CD14-positive monocyte (primary cell): ENCODE measurements at regions of chr14 and their contacts with region 1.

Region 1: DNA sequence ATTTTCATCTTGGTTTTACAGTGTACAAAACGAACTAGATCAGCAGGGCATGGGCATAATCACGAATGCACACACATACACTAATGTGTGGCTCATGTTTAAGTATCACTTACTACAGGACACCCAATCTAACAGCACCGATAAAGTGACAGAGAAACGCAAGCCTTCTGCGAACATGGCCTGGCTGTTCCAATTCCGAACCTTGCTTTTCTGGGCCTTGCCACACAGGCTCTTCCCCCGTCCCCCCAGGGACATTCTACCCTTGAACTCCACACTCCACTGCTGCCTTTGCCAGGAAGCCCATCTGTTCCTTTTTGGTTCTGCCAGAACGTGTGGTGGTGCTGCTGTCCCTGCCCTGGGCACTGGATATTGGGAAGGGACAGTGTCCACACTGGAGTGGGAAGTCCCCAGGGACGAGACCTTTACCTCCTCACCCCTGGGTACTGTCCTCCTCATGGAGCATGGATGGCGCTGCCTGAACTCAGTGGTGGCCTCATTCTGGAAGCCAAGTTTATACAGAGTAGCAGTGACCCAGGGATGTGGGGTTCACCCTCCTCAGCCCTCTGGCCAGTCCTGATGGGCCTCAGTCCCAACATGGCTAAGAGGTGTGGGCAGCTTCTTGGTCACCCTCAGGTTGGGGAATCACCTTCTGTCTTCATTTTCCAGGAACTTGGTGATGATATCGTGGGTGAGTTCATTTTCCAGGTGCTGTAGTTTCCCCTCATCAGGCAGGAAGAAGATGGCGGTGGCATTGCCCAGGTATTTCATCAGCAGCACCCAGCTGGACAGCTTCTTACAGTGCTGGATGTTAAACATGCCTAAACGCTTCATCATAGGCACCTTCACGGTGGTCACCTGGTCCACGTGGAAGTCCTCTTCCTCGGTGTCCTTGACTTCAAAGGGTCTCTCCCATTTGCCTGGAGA is 7.9 kb downstream of the SERPINA1 start:
- DNase-seq: no peak
- H3K4me3 ChIP-seq: no peak overlapping the region
- H3K4me3 Mint-ChIP-seq: no peak overlapping the region
- H3K27ac ChIP-seq: peak overlapping the region in 1 of 2 donors; percentile 46
- H3K27ac Mint-ChIP-seq: peak overlapping the region in 5 of 7 donors; percentile 15 to 87 (median 47)
- H3K4me1 ChIP-seq: peaks cover 33 to 42% of the 10 kb centered on the region in 2 donors
- H3K4me1 Mint-ChIP-seq: peaks cover 43% of the 10 kb centered on the region
- H3K27me3 ChIP-seq: no peaks in the 10 kb centered on the region
- H3K27me3 Mint-ChIP-seq: peaks cover 0 to 4% (median 3%) of the 10 kb centered on the region in 3 donors
- CTCF ChIP-seq: no peak

Region 2: DNA sequence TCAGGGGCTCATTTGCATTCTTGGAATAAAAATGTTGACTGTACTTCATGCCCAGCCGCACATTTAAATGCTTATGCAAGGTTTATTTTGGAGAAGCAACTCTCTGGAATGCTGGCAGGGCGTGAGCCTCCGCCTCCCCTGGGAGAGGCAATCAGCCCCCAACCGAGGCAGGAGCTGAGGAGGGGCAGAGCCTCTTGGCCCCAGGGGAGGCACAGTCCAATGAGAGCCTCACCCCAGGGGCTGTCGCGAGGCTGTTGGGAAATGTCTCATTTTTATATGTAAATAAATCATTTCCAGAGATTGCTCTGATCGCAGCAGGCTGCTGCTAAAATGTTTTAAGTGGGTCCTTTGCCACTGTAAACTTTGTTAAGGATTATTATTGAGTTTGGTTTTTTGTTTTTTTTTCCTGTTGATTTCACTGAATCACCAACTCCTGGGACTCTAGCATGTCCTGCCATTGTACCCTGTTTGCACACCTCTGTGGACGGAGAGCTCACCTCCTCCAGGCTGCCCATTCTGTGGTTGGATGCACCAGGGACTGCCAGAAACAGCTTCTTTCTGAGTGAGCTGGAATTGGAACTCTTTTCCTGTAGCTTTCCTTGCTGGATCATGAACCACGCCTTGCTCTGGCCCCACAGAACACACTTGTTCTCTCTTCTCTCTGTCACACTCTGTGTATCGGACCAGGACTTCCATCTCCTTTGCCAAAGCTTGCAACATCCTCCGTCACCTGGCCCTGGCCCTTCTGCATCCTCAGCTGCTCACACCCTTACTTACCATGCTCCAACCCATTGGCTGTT is 500.3 kb before region 1 on chr14:
- intact Hi-C with region 1: no loop called
- DNase-seq: no peak
- H3K4me3 ChIP-seq: no peak overlapping the region
- H3K4me3 Mint-ChIP-seq: no peak overlapping the region
- H3K27ac ChIP-seq: no peak overlapping the region
- H3K27ac Mint-ChIP-seq: no peak overlapping the region
- H3K4me1 ChIP-seq: no peaks in the 10 kb centered on the region
- H3K4me1 Mint-ChIP-seq: peaks cover 3% of the 10 kb centered on the region
- H3K27me3 ChIP-seq: no peaks in the 10 kb centered on the region
- H3K27me3 Mint-ChIP-seq: peaks cover 6 to 17% (median 12%) of the 10 kb centered on the region in 3 donors
- CTCF ChIP-seq: no peak

Region 3: GRCh38 chr14:94364964-94365363 is 15.5 kb before region 1 on chr14:
- intact Hi-C with region 1: loop called (anchors 1 kb)
- DNase-seq: no peak
- H3K4me3 ChIP-seq: no peak overlapping the region
- H3K4me3 Mint-ChIP-seq: no peak overlapping the region
- H3K27ac ChIP-seq: no peak overlapping the region
- H3K27ac Mint-ChIP-seq: peak overlapping the region in 1 of 7 donors; percentile 43
- H3K4me1 ChIP-seq: peaks cover 22% of the 10 kb centered on the region in 2 donors
- H3K4me1 Mint-ChIP-seq: peaks cover 23% of the 10 kb centered on the region
- H3K27me3 ChIP-seq: no peaks in the 10 kb centered on the region
- H3K27me3 Mint-ChIP-seq: peaks cover 0 to 4% (median 4%) of the 10 kb centered on the region in 3 donors
- CTCF ChIP-seq: no peak

Region 4: DNA sequence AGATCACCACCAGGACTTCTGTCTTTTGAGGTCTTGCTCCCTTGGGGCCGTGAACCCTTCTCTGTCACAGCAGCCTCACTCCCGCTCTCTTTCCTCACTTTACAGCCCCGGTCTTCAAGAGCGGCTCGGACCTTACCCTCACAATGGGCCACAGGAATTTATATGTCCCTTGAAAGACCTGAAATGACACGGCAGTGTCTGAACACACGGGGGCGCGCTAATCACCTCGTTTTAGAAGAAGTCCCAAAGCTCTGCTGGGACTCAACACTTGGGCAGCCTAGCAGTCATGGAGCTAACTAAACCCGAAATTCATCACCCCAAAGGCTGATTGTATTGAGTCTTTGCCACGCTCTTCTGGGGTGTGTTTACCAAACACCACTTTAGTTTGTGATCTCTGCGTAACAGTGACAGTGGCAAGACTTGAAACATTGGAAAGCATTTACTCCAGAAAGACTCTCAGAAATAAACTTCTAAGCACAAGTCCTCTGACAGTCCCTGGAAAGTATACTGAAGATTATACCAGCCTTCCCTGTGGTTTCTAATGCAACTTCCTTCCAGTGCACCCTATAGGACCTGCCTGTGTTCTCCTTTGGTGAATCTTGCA is 43.1 kb after region 1 on chr14:
- intact Hi-C with region 1: loop called in 1 of 2 experiments (anchors 5 kb)
- DNase-seq: peak; percentile 56 to 74 (median 71)
- H3K4me3 ChIP-seq: peak overlapping the region in 1 of 3 experiments; percentile 19
- H3K4me3 Mint-ChIP-seq: peak overlapping the region; percentile 64 to 85
- H3K27ac ChIP-seq: no peak overlapping the region
- H3K27ac Mint-ChIP-seq: peak overlapping the region in 4 of 7 donors; percentile 33 to 71 (median 56)
- H3K4me1 ChIP-seq: peaks cover 11 to 14% of the 10 kb centered on the region in 2 donors
- H3K4me1 Mint-ChIP-seq: peaks cover 24% of the 10 kb centered on the region
- H3K27me3 ChIP-seq: peaks cover 4 to 31% of the 10 kb centered on the region in 2 donors
- H3K27me3 Mint-ChIP-seq: peaks cover 17 to 25% (median 22%) of the 10 kb centered on the region in 3 donors
- CTCF ChIP-seq: peak; percentile 73